ENCODE measurements at regions of chr5 and their contacts with region 1.

Region 1: DNA sequence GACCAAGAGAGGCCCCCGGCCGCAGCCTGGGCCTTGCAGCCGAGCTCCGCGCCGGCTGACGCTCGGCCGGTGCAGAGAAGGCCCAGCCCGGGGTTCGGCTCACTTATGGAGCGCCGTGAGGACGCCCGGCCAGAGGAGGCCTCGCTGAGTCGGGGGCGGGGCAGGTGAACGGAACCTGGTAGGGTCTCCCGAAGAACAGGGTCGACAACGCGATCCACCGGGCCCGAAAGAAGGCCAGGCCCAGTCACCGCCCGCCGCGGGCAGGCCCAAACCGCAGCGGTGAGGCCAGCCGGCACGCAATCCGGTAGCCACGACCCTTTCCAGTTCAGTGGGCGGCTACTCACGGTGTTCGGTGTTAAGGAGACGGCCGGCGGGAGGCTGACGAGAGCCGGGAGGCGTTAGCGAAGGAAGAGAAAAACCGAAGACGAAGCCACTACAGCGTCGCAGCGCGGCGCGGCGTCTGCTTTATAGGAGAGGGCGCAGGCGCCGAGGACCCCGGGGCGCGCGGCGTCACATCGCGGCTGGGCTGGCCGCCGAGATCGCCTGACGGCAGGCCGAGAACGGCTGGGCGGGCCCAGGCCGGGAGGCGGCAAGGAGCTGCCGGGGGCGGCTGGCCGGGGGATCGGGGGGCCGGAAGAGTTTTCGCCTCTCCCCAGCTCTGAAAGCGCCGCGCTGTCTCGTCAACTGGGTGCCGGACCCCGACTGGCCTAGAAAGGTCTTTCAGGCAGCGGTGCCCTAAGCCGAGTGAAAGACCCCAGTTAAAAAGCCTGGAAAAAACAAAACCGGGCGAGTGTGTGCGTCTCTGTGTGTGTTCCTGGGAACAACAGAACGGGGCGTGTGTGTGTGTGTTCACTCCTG is at the start of gene SKP1:
- DNase-seq: peak; percentile 73 to 95 (median 87)
- ATAC-seq: peak; percentile 81 to 83
- H3K4me3 Mint-ChIP-seq: peak within 1 kb of the TSS; percentile 93 to 99 (median 96)
- H3K27ac Mint-ChIP-seq: peak within 1 kb of the TSS; percentile 95 to 99 (median 98)
- H3K4me1 Mint-ChIP-seq: peaks cover 16 to 38% (median 30%) of the 10 kb centered on the region in 4 donors
- H3K27me3 Mint-ChIP-seq: no peaks in the 10 kb centered on the region
- polyA plus RNA-seq, gene SKP1: 1,138 to 1,312 (median 1,209) TPM

Region 2: DNA sequence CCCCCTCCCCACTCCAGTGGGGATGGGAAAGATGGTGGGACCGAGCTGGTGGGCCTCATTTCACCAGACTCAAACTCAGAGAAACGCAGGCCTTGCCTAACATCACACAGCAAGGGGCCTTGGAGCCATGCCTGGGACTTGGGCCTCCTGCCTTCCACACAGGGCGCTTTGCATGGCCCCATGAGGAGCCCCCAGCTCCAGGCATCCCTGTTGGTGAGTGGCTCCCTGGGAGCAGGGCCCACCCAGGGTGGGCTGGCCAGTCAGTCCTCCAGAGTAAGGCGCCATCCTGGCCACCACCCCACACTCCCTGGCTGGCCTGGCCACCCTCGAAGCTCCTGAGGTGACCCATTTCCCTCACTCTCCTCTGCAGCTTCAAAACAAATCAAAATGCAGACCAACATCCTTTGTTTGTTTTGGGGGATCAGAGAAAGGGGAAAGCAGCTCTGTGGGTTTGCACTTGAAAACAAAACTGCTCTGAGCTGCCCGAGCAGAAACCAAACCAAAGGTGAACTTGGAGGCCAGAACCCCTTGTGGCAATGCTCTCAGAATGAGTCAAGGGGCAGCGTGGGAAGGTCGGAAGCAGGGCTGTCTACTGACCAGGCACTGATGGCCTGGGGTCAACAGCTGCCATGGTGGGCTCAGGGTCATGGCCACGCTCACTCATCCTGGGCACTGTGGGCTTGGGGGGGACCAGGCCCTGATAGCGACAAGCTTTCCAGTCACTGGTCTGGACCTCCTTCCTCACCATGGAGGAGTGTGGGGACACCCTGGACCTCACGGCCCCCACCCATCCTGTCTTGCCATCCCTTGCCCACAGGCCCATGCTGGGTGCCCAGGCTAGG is 134.9 kb before region 1 on chr5:
- POLR2A ChIA-PET with region 1: interaction called, 21 read pairs
- DNase-seq: peak in 2 of 10 donors; percentile 29 to 41
- ATAC-seq: peak; percentile 12 to 31
- H3K4me3 Mint-ChIP-seq: peak overlapping the region; percentile 22 to 74 (median 66)
- H3K27ac Mint-ChIP-seq: peak overlapping the region; percentile 78 to 97 (median 86)
- H3K4me1 Mint-ChIP-seq: peaks cover 23 to 70% (median 63%) of the 10 kb centered on the region in 4 donors
- H3K27me3 Mint-ChIP-seq: no peaks in the 10 kb centered on the region

Region 3: GRCh38 chr5:134113902-134114875 is 62.6 kb before region 1 on chr5 and contains the start of gene TCF7:
- POLR2A ChIA-PET with region 1: interaction called, 12 read pairs
- DNase-seq: peak; percentile 76 to 91 (median 86)
- ATAC-seq: peak; percentile 59 to 72
- H3K4me3 Mint-ChIP-seq: peak within 1 kb of the TSS; percentile 94 to 100 (median 98)
- H3K27ac Mint-ChIP-seq: peak within 1 kb of the TSS; percentile 91 to 99 (median 98)
- H3K4me1 Mint-ChIP-seq: peaks cover 35 to 65% (median 51%) of the 10 kb centered on the region in 4 donors
- H3K27me3 Mint-ChIP-seq: peaks cover 0 to 4% (median 0%) of the 10 kb centered on the region in 5 donors
- polyA plus RNA-seq, gene TCF7: 207 to 600 (median 328) TPM

Region 4: DNA sequence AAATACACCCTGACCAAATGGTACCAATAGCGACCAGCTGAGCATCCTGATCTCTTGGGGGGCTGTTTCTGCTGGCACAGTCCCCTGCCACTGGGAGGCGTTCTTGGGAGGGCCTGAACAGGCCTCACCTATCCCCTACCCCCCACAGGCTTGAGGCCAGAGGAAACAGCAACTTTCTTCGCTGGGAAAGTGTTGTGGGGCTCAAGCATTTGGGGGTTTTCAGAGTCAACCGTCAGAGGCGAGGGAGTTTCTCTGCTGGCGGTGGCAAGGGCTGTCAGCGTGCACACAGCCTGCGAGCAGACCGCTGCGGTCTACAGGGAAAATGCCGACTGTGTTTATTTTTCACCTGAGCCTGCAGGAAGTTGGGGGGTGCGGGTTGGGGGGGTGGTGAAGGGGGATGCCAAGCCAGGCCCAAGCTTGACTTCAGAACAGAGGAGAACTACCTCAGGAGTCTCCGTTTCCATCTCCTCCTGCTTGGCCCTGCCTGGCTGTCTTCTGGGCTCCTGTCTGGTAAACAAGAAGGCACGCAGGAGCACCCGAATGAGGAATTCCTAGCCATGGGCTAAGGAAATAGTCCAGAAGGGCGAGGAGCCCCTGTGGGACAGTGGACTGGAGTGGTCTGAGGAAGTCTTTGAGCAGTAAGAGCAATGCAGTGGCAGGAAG is 44.2 kb before region 1 on chr5:
- POLR2A ChIA-PET with region 1: interaction called, 23 read pairs
- DNase-seq: peak; percentile 71 to 95 (median 91)
- ATAC-seq: peak; percentile 72 to 88
- H3K4me3 Mint-ChIP-seq: peak overlapping the region; percentile 93 to 100 (median 98)
- H3K27ac Mint-ChIP-seq: peak overlapping the region; percentile 91 to 99 (median 97)
- H3K4me1 Mint-ChIP-seq: peaks cover 51 to 100% (median 98%) of the 10 kb centered on the region in 4 donors
- H3K27me3 Mint-ChIP-seq: no peaks in the 10 kb centered on the region

Region 5: DNA sequence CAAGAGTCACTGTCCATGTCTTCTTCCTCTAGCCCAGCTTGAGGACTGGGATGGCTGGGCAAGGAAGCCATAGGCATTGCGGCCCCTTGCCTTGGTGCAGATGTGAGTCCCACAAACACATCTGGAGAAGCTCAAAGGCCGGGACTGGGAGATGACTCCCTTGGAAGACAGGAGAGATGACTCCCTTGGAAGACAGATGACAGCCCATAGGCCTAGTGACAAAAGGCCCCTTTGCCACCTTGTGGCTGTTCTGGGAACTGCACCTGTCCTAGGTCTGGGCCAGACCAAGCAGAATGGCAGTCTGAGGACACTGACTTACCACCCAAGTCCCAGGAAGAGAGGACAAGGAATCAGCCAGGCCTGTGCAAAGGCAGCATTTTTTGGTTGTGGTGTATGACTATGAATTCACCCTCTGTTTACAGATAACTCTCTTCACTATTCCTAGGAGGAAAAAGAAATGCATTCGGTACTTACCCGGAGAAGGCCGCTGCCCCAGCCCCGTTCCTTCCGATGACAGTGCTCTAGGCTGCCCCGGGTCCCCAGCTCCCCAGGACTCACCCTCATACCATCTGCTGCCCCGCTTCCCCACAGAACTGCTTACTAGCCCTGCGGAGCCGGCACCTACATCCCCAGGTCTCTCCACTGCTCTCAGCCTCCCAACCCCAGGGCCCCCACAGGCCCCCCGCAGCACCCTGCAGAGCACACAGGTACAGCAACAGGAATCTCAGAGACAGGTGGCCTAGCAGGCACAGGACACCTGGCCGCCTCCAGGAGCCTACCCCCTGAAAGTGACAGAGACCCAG is 30.8 kb before region 1 on chr5:
- POLR2A ChIA-PET with region 1: interaction called, 73 read pairs
- DNase-seq: peak; percentile 66 to 89 (median 80)
- ATAC-seq: peak; percentile 63 to 66
- H3K4me3 Mint-ChIP-seq: peak overlapping the region in 4 of 10 donors; percentile 12 to 69 (median 48)
- H3K27ac Mint-ChIP-seq: peak overlapping the region; percentile 77 to 96 (median 94)
- H3K4me1 Mint-ChIP-seq: peaks cover 34 to 70% (median 56%) of the 10 kb centered on the region in 4 donors
- H3K27me3 Mint-ChIP-seq: no peaks in the 10 kb centered on the region

Region 6: GRCh38 chr5:134161513-134162395 is 15.0 kb before region 1 on chr5:
- POLR2A ChIA-PET with region 1: interaction called, 13 read pairs
- DNase-seq: no peak
- ATAC-seq: no peak
- H3K4me3 Mint-ChIP-seq: no peak overlapping the region
- H3K27ac Mint-ChIP-seq: peak overlapping the region in 5 of 10 donors; percentile 1 to 37 (median 8)
- H3K4me1 Mint-ChIP-seq: peaks cover 18 to 54% (median 44%) of the 10 kb centered on the region in 4 donors
- H3K27me3 Mint-ChIP-seq: no peaks in the 10 kb centered on the region

Region 7: DNA sequence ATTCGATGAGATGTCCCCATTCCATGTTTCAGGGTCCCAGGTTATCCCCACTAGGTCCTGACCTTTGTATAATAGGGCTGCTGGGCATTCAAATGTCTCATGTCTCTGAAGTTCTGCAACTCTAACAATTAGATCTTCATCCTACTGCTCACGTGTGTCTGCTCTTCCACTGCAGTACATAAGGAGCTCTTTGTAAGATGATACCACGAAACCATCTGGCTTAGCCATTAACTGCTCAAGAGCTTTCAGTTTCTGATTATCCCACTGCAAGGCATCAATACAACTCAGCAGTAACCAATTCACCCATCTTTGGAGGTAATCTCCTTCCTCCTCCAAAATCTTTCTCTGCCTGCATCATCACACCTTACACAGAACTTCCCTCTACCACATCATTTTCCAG is 99.1 kb after region 1 on chr5:
- POLR2A ChIA-PET with region 1: no interaction called
- DNase-seq: no peak
- ATAC-seq: no peak
- H3K4me3 Mint-ChIP-seq: no peak overlapping the region
- H3K27ac Mint-ChIP-seq: no peak overlapping the region
- H3K4me1 Mint-ChIP-seq: no peaks in the 10 kb centered on the region
- H3K27me3 Mint-ChIP-seq: peaks cover 0 to 17% (median under 1%) of the 10 kb centered on the region in 5 donors

Region 8: DNA sequence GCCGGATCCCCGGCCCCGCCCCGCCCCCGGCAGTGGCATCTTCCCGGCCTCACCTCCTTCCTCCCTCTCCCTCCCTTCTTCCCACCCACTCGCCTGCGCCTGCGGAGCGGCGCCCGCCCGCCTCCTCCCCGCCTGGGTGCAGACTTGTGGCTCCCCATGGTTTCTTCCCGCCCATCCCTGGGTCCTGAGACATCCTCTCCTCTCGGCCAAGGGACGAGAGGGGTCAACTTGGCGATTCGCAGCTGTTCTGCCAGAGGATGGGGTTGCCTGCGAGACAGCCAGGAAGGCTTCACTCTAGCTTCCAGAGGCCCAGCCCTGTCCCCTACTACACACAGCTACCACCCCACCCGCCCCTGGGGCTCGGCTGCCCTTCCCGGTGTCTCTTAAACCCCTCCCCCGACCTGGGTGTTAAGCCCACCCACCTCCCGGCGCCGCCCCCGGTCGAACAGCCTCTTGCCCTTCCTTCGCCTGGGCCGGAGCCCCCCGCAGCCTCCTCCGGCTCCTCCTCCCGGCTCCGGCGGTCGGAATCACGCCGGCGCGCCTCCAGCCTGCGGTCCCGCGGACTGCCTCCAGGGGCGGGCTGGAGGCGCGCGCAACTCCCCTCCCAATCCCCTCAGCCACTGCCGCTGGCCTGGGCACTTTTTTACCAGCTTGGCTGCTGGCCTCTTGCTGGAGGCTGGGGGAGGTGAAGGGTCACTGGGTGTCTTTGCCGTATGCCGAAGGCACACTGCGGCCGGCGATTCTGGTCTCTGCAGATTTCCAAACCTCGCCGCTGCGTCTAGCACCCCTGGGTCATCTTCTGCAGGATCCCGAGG is 350.6 kb after region 1 on chr5:
- POLR2A ChIA-PET with region 1: interaction called, 17 read pairs
- DNase-seq: peak; percentile 57 to 85 (median 72)
- ATAC-seq: peak; percentile 21 to 28
- H3K4me3 Mint-ChIP-seq: peak overlapping the region; percentile 90 to 100 (median 94)
- H3K27ac Mint-ChIP-seq: peak overlapping the region; percentile 78 to 100 (median 94)
- H3K4me1 Mint-ChIP-seq: peaks cover 37 to 55% (median 53%) of the 10 kb centered on the region in 4 donors
- H3K27me3 Mint-ChIP-seq: no peaks in the 10 kb centered on the region

Measured in naive thymus-derived CD8-positive, alpha-beta T cell (primary cell).